ENCODE measurements at regions of chr10 and their contacts with region 1.

Region 1: DNA sequence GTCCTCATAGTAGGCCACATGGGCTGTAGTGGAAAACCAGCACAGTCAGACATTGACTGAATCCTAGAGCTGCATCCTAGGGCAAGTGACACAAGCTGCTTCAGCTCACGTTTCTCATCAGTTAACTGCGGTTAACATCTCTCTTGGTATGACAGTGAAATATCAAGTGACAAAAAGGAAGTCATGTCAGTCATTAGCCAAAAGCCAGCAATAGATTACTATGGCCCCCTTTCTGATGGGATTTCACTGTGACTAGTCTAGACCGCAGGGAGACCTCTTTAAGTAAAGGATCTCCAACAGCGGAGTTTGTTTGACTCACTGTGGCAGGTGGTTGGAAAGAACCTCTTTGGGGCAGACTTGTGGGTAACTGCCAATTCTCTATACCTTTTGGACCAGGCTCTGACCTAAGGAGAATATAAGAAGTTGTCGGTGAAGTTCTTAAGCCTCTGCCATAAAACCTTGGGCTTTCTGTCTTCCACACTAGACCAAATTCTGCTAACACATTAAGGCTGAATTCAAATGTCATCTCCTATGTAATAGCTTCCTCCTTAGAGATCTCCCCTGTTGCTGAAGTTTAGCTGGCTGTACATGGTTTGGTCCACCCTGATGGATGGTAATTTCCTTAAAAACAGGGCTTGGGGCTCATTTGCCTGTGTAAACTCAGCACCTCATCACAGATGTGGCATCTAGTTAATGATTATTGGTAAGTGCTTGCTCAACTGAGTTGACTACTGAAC is 115.3 kb downstream of the SGMS1 start:
- DNase-seq: peak in 1 of 9 donors; percentile 29
- ATAC-seq: peak; percentile 49
- H3K4me3 ChIP-seq: no peak overlapping the region
- H3K4me3 Mint-ChIP-seq: no peak overlapping the region
- H3K27ac ChIP-seq: no peak overlapping the region
- H3K27ac Mint-ChIP-seq: peak overlapping the region in 1 of 9 donors; percentile 35
- H3K4me1 ChIP-seq: peaks cover 9 to 45% of the 10 kb centered on the region in 2 donors
- H3K4me1 Mint-ChIP-seq: peaks cover 31 to 76% (median 68%) of the 10 kb centered on the region in 7 donors
- H3K27me3 ChIP-seq: no peaks in the 10 kb centered on the region
- H3K27me3 Mint-ChIP-seq: no peaks in the 10 kb centered on the region

Region 2: DNA sequence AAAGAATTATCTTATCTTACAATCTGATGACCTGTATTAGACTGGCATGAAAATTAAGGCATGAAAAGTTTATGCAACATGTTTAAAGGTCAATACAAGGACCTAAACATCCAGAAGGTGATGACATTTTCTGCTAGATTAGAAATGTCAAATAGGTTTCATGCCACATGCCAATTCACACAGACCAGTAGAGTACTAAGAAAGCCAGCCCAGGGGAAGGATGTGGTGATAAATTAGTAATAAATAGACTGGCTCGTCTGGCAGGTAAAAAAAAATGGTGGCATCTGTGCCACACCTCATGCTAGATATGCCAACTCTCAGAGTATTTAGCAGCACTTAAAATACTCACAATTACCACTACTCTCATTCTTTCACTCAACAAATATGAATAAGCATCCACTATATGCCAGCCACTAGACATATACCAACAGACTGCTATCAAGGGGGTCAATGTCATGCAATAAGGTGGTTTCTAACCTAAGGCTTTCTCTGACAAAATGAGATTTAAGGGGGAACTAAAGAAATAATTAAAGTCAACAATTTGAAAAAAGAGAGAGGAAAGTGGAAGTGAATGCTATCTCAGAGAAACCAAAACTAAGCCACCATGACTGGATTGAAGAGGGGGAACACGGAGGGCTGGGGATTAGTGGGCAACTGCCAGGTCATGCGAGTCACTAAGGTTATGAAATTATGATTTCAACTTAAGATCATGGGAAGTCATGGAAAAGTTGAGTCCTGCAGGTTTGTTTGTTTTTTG is 31.8 kb after region 1 on chr10:
- CTCF ChIA-PET with region 1: no interaction called
- POLR2A ChIA-PET with region 1: no interaction called
- intact Hi-C with region 1: loop called in 1 of 2 experiments (anchors 5 kb)
- DNase-seq: no peak
- ATAC-seq: no peak
- H3K4me3 ChIP-seq: no peak overlapping the region
- H3K4me3 Mint-ChIP-seq: peak overlapping the region in 3 of 10 donors; percentile 5 to 32 (median 8)
- H3K27ac ChIP-seq: no peak overlapping the region
- H3K27ac Mint-ChIP-seq: peak overlapping the region in 3 of 9 donors; percentile 8 to 40 (median 28)
- H3K4me1 ChIP-seq: peaks cover 7 to 13% of the 10 kb centered on the region in 2 donors
- H3K4me1 Mint-ChIP-seq: peaks cover 38 to 72% (median 67%) of the 10 kb centered on the region in 7 donors
- H3K27me3 ChIP-seq: no peaks in the 10 kb centered on the region
- H3K27me3 Mint-ChIP-seq: no peaks in the 10 kb centered on the region

Region 3: GRCh38 chr10:50636618-50637579 is 128.4 kb after region 1 on chr10:
- CTCF ChIA-PET with region 1: no interaction called
- POLR2A ChIA-PET with region 1: no interaction called
- intact Hi-C with region 1: loop called in 1 of 2 experiments (anchors 5 kb)
- DNase-seq: peak in 3 of 9 donors; percentile 19 to 34 (median 29)
- ATAC-seq: peak; percentile 84
- H3K4me3 ChIP-seq: peak overlapping the region; percentile 41
- H3K4me3 Mint-ChIP-seq: peak overlapping the region; percentile 52 to 78 (median 72)
- H3K27ac ChIP-seq: peak overlapping the region; percentile 11
- H3K27ac Mint-ChIP-seq: peak overlapping the region; percentile 20 to 73 (median 55)
- H3K4me1 ChIP-seq: peaks cover 24 to 27% of the 10 kb centered on the region in 2 donors
- H3K4me1 Mint-ChIP-seq: peaks cover 22 to 39% (median 35%) of the 10 kb centered on the region in 7 donors
- H3K27me3 ChIP-seq: no peaks in the 10 kb centered on the region
- H3K27me3 Mint-ChIP-seq: peaks cover 0 to 56% (median 0%) of the 10 kb centered on the region in 5 donors